CD14-positive monocyte (primary cell): ENCODE measurements at regions of chr2 and their contacts with region 1.

Region 1: DNA sequence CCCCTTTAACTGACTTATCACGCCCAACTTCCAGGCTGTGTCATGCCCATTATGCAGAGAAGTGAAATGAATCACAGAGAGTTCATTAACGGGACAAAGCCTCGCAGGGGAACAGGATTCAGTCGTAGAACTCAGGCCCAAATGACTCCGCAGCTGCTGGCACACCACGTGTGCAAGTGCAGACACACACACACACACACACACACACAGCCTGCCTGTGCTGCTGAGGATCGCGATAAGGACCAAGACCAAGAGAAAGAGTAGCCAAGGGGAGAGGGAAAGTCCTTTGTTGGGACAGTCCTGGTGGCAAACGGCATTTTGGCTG is 90.0 kb upstream of the TAF1B start:
- DNase-seq: peak; percentile 96 to 97 (median 97)
- H3K4me3 ChIP-seq: peak overlapping the region in 1 of 3 experiments; percentile 21
- H3K4me3 Mint-ChIP-seq: peak overlapping the region; percentile 68 to 75
- H3K27ac ChIP-seq: peak overlapping the region; percentile 87 to 95
- H3K27ac Mint-ChIP-seq: peak overlapping the region; percentile 84 to 99 (median 97)
- H3K4me1 ChIP-seq: peaks cover 46 to 51% of the 10 kb centered on the region in 2 donors
- H3K4me1 Mint-ChIP-seq: peaks cover 51% of the 10 kb centered on the region
- H3K27me3 ChIP-seq: peaks cover 11 to 44% of the 10 kb centered on the region in 2 donors
- H3K27me3 Mint-ChIP-seq: peaks cover 32 to 63% (median 42%) of the 10 kb centered on the region in 3 donors
- CTCF ChIP-seq: no peak

Region 2: GRCh38 chr2:9703085-9703641 is 50.1 kb before region 1 on chr2:
- intact Hi-C with region 1: loop called in 1 of 2 experiments (anchors 5 kb)
- DNase-seq: peak; percentile 52 to 66 (median 61)
- H3K4me3 ChIP-seq: no peak overlapping the region
- H3K4me3 Mint-ChIP-seq: no peak overlapping the region
- H3K27ac ChIP-seq: peak overlapping the region; percentile 19 to 68
- H3K27ac Mint-ChIP-seq: peak overlapping the region; percentile 43 to 89 (median 68)
- H3K4me1 ChIP-seq: peaks cover 22 to 37% of the 10 kb centered on the region in 2 donors
- H3K4me1 Mint-ChIP-seq: peaks cover 28% of the 10 kb centered on the region
- H3K27me3 ChIP-seq: no peaks in the 10 kb centered on the region
- H3K27me3 Mint-ChIP-seq: peaks cover 1 to 4% (median 3%) of the 10 kb centered on the region in 3 donors
- CTCF ChIP-seq: no peak

Region 3: GRCh38 chr2:9739531-9739964 is 13.7 kb before region 1 on chr2:
- intact Hi-C with region 1: loop called in 1 of 2 experiments (anchors 1 kb)
- DNase-seq: peak in 2 of 3 donors; percentile 31 to 39
- H3K4me3 ChIP-seq: peak overlapping the region in 2 of 3 experiments; percentile 31 to 58
- H3K4me3 Mint-ChIP-seq: peak overlapping the region; percentile 81 to 83
- H3K27ac ChIP-seq: peak overlapping the region in 1 of 2 donors; percentile 49
- H3K27ac Mint-ChIP-seq: peak overlapping the region in 6 of 7 donors; percentile 56 to 89 (median 76)
- H3K4me1 ChIP-seq: peaks cover 12% of the 10 kb centered on the region in 2 donors
- H3K4me1 Mint-ChIP-seq: peaks cover 25% of the 10 kb centered on the region
- H3K27me3 ChIP-seq: no peaks in the 10 kb centered on the region
- H3K27me3 Mint-ChIP-seq: peaks cover 5 to 16% (median 5%) of the 10 kb centered on the region in 3 donors
- CTCF ChIP-seq: no peak

Region 4: DNA sequence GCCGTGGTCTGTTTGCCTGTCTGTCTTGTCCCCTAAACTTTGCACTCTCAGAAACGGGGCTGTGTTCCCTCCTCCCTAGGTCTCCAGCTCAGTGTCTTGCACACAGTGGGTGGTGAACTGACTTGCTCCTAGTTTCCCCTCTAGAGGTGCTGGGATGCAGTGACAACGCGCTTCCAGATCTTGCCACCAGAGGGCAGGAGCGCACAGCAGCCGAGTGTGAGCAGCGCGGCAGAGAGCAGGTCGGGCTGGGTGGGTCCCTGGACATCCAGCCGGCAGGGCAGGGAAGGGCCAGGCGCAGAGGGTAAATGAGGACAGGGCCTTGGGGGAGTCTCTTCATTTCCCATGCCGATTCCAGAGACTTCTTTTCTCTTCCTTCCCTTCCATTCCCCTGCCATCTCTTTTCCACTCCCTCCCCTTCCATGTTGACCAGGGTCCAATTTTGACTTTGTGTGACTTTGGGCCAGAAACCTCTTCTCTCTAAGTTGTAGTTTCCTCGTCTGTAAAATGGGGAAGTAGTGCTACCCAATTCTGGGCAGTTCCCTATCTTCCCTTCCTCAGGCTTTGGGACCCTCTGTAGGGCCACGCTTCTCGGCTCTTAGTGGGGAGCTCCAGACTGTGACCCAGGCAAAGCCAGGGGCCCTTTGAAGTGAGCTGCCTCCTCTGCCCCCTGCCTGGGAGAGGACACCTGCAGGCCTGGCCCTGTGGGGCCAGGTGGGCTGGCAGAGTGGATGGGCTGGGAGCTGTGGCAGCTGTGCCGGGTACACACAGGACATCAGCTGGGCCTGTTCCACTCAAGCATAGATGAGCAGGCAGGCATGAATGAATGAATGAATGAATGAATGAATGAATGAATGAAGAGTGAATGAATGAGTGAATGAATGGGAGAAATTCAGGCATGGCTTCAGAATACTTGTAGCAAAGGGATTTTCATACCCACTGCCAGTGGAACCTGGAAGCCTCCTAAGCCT is 46.7 kb after region 1 on chr2:
- intact Hi-C with region 1: loop called in 1 of 2 experiments (anchors 5 kb)
- DNase-seq: peak; percentile 84 to 86 (median 85)
- H3K4me3 ChIP-seq: peak overlapping the region; percentile 28 to 75 (median 40)
- H3K4me3 Mint-ChIP-seq: peak overlapping the region; percentile 79 to 99
- H3K27ac ChIP-seq: peak overlapping the region; percentile 71 to 87
- H3K27ac Mint-ChIP-seq: peak overlapping the region; percentile 93 to 98 (median 95)
- H3K4me1 ChIP-seq: peaks cover 55 to 62% of the 10 kb centered on the region in 2 donors
- H3K4me1 Mint-ChIP-seq: peaks cover 61% of the 10 kb centered on the region
- H3K27me3 ChIP-seq: no peaks in the 10 kb centered on the region
- H3K27me3 Mint-ChIP-seq: peaks cover 2% of the 10 kb centered on the region in 3 donors
- CTCF ChIP-seq: peak; percentile 96

Region 5: GRCh38 chr2:9914384-9915065 is 161.3 kb after region 1 on chr2:
- intact Hi-C with region 1: no loop called
- DNase-seq: no peak
- H3K4me3 ChIP-seq: no peak overlapping the region
- H3K4me3 Mint-ChIP-seq: no peak overlapping the region
- H3K27ac ChIP-seq: no peak overlapping the region
- H3K27ac Mint-ChIP-seq: peak overlapping the region in 1 of 7 donors; percentile 54
- H3K4me1 ChIP-seq: no peaks in the 10 kb centered on the region
- H3K4me1 Mint-ChIP-seq: no peaks in the 10 kb centered on the region
- H3K27me3 ChIP-seq: no peaks in the 10 kb centered on the region
- H3K27me3 Mint-ChIP-seq: no peaks in the 10 kb centered on the region
- CTCF ChIP-seq: no peak